ENCODE measurements at regions of chr1 and their contacts with region 1.

Region 1: GRCh38 chr1:20361806-20362640 is 71.3 kb downstream of the VWA5B1 start:
- DNase-seq: peak; percentile 49 to 51
- ATAC-seq: peak; percentile 32 to 80; a peak in 3 of 6 replicates
- H3K4me3 ChIP-seq: no peak overlapping the region
- H3K27ac ChIP-seq: no peak overlapping the region
- H3K4me1 ChIP-seq: peaks cover 18% of the 10 kb centered on the region
- CTCF ChIP-seq: peak; percentile 60
- EP300 ChIP-seq: no peak
- POLR2A ChIP-seq: no peak
- RAD21 ChIP-seq: peak; percentile 68 to 74

Region 2: GRCh38 chr1:19563324-19564097 is 798.5 kb before region 1 on chr1:
- CTCF ChIA-PET with region 1: no interaction called
- POLR2A ChIA-PET with region 1: no interaction called
- DNase-seq: no peak
- ATAC-seq: no peak
- H3K4me3 ChIP-seq: no peak overlapping the region
- H3K27ac ChIP-seq: no peak overlapping the region
- H3K4me1 ChIP-seq: no peaks in the 10 kb centered on the region
- CTCF ChIP-seq: no peak
- EP300 ChIP-seq: no peak
- POLR2A ChIP-seq: no peak
- RAD21 ChIP-seq: no peak

Region 3: GRCh38 chr1:20290624-20291597 is 71.1 kb before region 1 on chr1 and contains the start of gene VWA5B1:
- CTCF ChIA-PET with region 1: no interaction called
- POLR2A ChIA-PET with region 1: no interaction called
- DNase-seq: no peak
- ATAC-seq: no peak; a peak in 1 of 6 replicates
- H3K4me3 ChIP-seq: no peak within 1 kb of the TSS
- H3K27ac ChIP-seq: no peak within 1 kb of the TSS
- H3K4me1 ChIP-seq: no peaks in the 10 kb centered on the region
- CTCF ChIP-seq: no peak
- EP300 ChIP-seq: no peak
- POLR2A ChIP-seq: no peak
- RAD21 ChIP-seq: no peak
- polyA plus RNA-seq, gene VWA5B1: not detected in 2 replicates

Region 4: GRCh38 chr1:20334103-20334502 is 27.9 kb before region 1 on chr1:
- CTCF ChIA-PET with region 1: interaction called, 10 read pairs
- POLR2A ChIA-PET with region 1: no interaction called
- DNase-seq: no peak
- ATAC-seq: no peak
- H3K4me3 ChIP-seq: no peak overlapping the region
- H3K27ac ChIP-seq: no peak overlapping the region
- H3K4me1 ChIP-seq: no peaks in the 10 kb centered on the region
- CTCF ChIP-seq: no peak
- EP300 ChIP-seq: no peak
- POLR2A ChIP-seq: no peak
- RAD21 ChIP-seq: no peak

Region 5: GRCh38 chr1:20376880-20377494 is 15.0 kb after region 1 on chr1:
- CTCF ChIA-PET with region 1: interaction called, 17 read pairs
- POLR2A ChIA-PET with region 1: no interaction called
- DNase-seq: peak; percentile 34 to 59
- ATAC-seq: peak; percentile 65 to 92; a peak in 5 of 6 replicates
- H3K4me3 ChIP-seq: no peak overlapping the region
- H3K27ac ChIP-seq: peak overlapping the region in 1 of 2 experiments; percentile 43; a peak in 2 of 6 replicates
- H3K4me1 ChIP-seq: peaks cover 33% of the 10 kb centered on the region
- CTCF ChIP-seq: peak; percentile 48
- EP300 ChIP-seq: no peak
- POLR2A ChIP-seq: no peak
- RAD21 ChIP-seq: peak; percentile 42 to 61; a peak in 4 of 5 replicates

Region 6: GRCh38 chr1:20430355-20431175 is 68.5 kb after region 1 on chr1:
- CTCF ChIA-PET with region 1: interaction called, 15 read pairs
- POLR2A ChIA-PET with region 1: no interaction called
- DNase-seq: peak; percentile 23 to 39
- ATAC-seq: peak; percentile 55 to 87; a peak in 3 of 6 replicates
- H3K4me3 ChIP-seq: no peak overlapping the region
- H3K27ac ChIP-seq: peak overlapping the region; percentile 35 to 61; a peak in 3 of 6 replicates
- H3K4me1 ChIP-seq: peaks cover 11% of the 10 kb centered on the region
- CTCF ChIP-seq: peak; percentile 64
- EP300 ChIP-seq: no peak
- POLR2A ChIP-seq: no peak
- RAD21 ChIP-seq: peak; percentile 80 to 83